ENCODE measurements at regions of chr9 and their contacts with region 1.

Region 1: DNA sequence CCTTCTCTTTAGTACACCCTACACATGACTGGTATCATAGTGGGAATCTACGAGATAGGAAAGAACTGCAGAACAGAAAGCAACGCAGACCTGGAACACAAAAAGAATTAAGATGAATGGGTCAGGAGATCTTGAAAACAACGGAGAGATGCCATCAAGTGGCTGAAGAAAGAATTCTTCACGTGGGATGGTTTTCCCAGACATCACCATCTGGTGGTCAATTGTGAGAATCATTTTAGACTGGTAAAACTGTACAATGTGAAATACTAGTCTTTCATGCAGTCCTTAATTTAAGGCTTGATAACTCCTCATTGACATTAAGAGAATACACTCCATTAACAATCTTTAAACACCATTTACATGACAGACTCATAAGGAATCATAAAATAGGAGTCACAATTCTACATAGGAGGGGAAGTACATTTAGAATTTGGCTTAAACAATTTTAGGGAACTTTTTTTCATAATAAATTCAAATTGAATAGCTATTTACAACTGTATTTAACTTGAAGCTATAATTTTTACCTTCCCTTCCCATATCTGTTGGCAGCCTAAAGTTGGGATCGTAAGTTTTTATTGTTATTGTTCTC is 128.4 kb upstream of the TRPM3 start:
- DNase-seq: no peak
- H3K4me3 ChIP-seq: no peak overlapping the region
- H3K27ac ChIP-seq: no peak overlapping the region
- H3K4me1 ChIP-seq: peaks cover 0 to 14% (median 7%) of the 10 kb centered on the region in 4 experiments; a peak in 2 of 7 replicates
- H3K27me3 ChIP-seq: no peaks in the 10 kb centered on the region
- CTCF ChIP-seq: peak in 2 of 3 experiments; percentile 81 to 99; a peak in 3 of 4 replicates
- EP300 ChIP-seq: no peak
- POLR2A ChIP-seq: no peak
- RAD21 ChIP-seq: peak; percentile 72 to 78

Region 2: DNA sequence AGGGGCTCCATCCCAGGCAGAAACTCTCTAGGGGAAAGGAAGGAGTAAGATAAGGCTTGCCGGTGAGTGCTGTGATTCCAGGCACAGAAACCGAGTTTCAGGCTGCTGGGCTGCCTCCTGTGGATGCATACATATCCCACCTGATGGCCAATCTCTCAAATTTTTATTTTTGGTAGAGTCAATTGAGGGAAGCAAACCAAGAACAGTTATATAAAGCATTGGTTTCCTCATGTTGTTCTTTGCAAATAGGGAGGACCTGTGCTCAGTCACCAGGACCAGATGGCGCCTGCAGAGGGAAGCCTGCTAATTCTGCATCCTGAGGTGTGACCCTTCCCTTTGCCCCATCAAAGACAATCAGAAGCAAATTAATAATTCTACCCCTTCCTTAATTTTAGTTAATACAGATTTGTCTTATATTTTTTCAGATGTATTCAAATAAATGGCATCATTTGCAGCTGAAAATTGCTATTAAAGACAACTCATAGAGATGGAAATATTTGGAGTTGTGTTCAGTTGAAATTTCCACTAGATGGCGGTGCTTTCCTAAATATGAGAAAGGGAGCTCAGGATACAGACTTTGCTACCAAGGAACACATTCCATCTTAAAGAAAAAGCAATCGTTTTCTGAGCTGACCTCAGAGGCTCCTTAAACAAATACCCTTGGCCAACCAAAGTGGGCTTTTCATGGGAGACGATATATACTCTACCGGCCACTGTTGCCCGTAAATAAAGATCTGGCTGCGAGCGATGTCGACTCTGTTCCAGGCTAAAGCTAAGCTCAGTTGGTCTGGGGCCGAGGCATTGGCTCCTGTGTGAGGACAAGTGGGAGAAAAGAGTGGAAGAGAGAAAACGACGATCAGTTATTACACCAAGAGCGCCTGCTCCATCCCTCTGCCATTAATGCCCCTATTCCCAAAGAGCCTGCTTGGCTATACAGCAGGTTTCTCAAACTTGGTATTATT is 609.7 kb before region 1 on chr9:
- CTCF ChIA-PET with region 1: interaction called, 12 read pairs
- POLR2A ChIA-PET with region 1: no interaction called
- DNase-seq: no peak
- H3K4me3 ChIP-seq: peak overlapping the region in 2 of 4 experiments; percentile 7 to 36; a peak in 2 of 8 replicates
- H3K27ac ChIP-seq: no peak overlapping the region
- H3K4me1 ChIP-seq: peaks cover 2 to 9% (median 6%) of the 10 kb centered on the region in 4 experiments; a peak in 3 of 7 replicates
- H3K27me3 ChIP-seq: no peaks in the 10 kb centered on the region
- CTCF ChIP-seq: peak in 2 of 3 experiments; percentile 55 to 61; a peak in 2 of 4 replicates
- EP300 ChIP-seq: no peak
- POLR2A ChIP-seq: no peak
- RAD21 ChIP-seq: peak; percentile 90 to 91

Region 3: DNA sequence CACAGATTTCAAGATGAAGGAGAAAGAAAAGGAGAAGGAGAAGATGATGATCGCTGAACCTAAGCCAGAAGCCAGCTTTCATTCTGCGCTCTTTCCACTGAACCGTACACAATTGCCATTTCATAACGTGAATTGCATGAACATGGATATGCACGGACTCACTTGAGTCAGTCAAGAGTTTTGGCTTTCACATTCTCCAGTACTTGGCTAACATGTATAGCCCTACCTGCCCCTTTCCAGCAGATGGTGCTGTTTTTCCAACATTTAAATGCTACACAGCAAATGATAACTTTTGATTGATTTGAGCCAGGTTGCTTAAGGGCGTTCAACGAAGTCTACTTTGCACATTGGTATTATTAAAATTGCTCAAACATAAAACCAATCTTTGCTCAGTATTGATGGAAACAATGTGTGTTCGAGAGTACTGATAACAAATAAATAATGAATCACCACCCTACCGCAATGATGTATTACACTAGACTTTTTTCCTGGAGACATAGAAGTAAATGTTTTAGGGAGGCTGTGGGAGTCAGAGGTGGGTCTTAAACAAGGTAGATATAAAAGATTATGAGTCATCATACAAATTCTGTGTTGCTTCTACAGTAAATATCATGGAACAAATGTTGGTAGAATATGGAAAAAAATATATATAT is 324.8 kb before region 1 on chr9:
- CTCF ChIA-PET with region 1: interaction called, 10 read pairs
- POLR2A ChIA-PET with region 1: no interaction called
- DNase-seq: no peak
- H3K4me3 ChIP-seq: no peak overlapping the region
- H3K27ac ChIP-seq: no peak overlapping the region
- H3K4me1 ChIP-seq: no peaks in the 10 kb centered on the region
- H3K27me3 ChIP-seq: no peaks in the 10 kb centered on the region
- CTCF ChIP-seq: peak in 2 of 3 experiments; percentile 72 to 91; a peak in 3 of 4 replicates
- EP300 ChIP-seq: no peak
- POLR2A ChIP-seq: no peak
- RAD21 ChIP-seq: peak; percentile 89 to 93

Region 4: GRCh38 chr9:71223953-71224538 is 25.8 kb before region 1 on chr9:
- CTCF ChIA-PET with region 1: interaction called, 10 read pairs
- POLR2A ChIA-PET with region 1: no interaction called
- DNase-seq: no peak
- H3K4me3 ChIP-seq: no peak overlapping the region
- H3K27ac ChIP-seq: no peak overlapping the region
- H3K4me1 ChIP-seq: no peaks in the 10 kb centered on the region; a peak in 1 of 7 replicates
- H3K27me3 ChIP-seq: no peaks in the 10 kb centered on the region
- CTCF ChIP-seq: peak in 2 of 3 experiments; percentile 55 to 58; a peak in 3 of 4 replicates
- EP300 ChIP-seq: no peak
- POLR2A ChIP-seq: no peak
- RAD21 ChIP-seq: peak; percentile 84 to 88

Region 5: DNA sequence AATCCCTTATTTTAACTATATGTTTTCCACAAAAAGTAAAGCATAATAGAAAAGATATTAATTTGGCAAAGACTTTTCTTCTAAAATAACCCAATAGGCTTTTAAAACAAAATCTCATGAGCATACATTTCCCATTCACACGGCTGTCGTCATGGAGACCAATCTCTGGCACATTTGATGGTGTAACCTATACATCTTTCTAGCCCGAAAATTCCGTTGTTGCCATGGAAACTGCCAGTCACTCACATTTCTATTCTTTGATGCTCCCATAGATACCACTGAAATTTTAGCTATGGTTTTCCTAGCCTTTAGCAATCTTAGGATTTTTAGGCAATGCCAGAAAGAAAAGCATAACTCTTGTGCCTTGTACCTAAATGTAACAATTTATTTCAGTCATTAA is 134.5 kb after region 1 on chr9:
- CTCF ChIA-PET with region 1: no interaction called
- POLR2A ChIA-PET with region 1: no interaction called
- DNase-seq: no peak
- H3K4me3 ChIP-seq: no peak overlapping the region
- H3K27ac ChIP-seq: no peak overlapping the region
- H3K4me1 ChIP-seq: peaks cover 0 to 4% (median 2%) of the 10 kb centered on the region in 4 experiments; a peak in 3 of 7 replicates
- H3K27me3 ChIP-seq: no peaks in the 10 kb centered on the region
- CTCF ChIP-seq: no peak
- EP300 ChIP-seq: no peak
- POLR2A ChIP-seq: no peak
- RAD21 ChIP-seq: no peak

Measured in H1 (cell line).